Activated T-helper 1 cell treated with anti-CD3 and anti-CD28 coated beads, Interleukin-12 subunit alpha, Interleukin-12 subunit beta, Interleukin-2, Interleukin-4 antibody, amounts not matched to agents 30 ng/mL and 10 ng/mL and 1 ng/mL, durations not matched to agents 14 hours and 24 hours and 36 hours (primary cell): ENCODE measurements at regions of chr9 and their contacts with region 1.

Region 1: DNA sequence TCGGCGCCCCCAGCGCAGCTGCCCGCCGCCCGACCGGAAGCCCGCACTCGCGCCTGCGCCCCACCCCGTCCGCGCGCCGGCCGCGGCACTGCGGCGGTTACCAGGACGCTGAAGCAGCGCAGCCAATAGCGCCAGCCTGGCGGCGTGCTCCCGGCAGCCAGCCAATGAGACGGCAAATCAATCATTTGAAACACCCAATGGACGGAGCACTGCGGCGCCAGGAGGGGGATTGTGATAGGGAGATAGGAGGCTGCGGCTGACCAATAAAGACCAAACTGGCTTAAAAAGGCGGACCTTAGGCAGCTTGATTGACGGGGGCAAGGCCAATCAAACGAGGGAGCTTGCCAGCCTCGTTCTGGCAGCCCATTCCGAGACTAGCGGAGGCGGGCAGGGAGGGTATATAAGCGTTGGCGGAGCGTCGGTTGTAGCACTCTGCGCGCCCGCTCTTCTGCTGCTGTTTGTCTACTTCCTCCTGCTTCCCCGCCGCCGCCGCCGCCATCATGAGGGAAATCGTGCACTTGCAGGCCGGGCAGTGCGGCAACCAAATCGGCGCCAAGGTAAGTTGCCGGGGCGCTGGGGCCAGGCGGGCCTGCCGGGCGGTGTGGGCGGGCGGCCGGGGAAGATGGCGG is at the start of gene TUBB4B:
- DNase-seq: peak; percentile 98
- H3K4me3 Mint-ChIP-seq: peak within 1 kb of the TSS; percentile 92
- H3K27ac Mint-ChIP-seq: peak within 1 kb of the TSS; percentile 91
- H3K4me1 Mint-ChIP-seq: peaks cover 22% of the 10 kb centered on the region
- H3K27me3 Mint-ChIP-seq: no peaks in the 10 kb centered on the region
- total RNA-seq, gene TUBB4B: 277 and 280 TPM in 2 replicates

Region 2: GRCh38 chr9:136885950-136886578 is 354.9 kb before region 1 on chr9 and contains the start of gene TRAF2:
- intact Hi-C with region 1: loop called (anchors 2 kb)
- DNase-seq: peak; percentile 99
- H3K4me3 Mint-ChIP-seq: peak within 1 kb of the TSS; percentile 98
- H3K27ac Mint-ChIP-seq: peak within 1 kb of the TSS; percentile 93
- H3K4me1 Mint-ChIP-seq: peaks cover 44% of the 10 kb centered on the region
- H3K27me3 Mint-ChIP-seq: no peaks in the 10 kb centered on the region
- total RNA-seq, gene TRAF2: 67.4 and 76.3 TPM in 2 replicates

Region 3: DNA sequence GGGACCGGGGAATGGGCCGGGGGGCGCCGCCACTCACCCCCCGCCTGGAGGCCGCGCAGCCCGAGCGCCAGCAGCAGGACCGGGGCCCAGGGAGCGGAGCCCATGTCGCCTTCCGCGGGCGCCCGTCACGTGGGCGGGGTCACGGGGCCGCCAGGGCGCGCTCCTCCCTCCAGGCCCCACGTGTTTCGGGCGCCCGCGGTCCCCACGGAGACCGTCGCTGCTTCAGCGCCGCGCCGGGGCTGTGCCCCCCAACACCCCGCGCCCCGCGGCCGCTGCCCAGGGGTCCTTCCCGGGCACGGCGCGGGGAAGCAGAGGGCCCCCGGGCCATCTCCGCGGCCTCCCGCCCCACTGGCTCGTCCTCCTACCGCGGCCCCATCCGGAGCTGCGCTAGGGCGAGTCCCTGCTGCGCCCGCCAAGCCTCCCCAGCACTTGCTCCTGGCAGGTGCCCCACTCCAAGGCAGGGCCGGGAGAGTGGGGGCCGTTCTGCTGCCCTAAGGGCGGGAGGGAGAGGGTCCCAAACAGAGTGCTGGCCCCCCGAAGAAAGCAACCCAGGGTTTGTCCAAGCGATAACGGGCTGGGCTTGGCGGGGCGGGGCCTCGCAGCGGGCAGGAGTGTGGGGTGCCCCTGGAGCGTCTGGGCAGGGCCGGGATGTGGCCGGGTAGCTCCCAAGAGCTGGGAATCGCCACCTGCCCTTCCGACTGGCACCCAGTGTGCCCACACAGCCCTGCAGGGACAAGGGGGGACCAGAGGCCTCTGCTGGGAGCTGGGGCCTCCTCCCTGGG is 126.2 kb before region 1 on chr9 and contains the start of gene DPP7:
- intact Hi-C with region 1: loop called (anchors 1 kb)
- DNase-seq: peak; percentile 76
- H3K4me3 Mint-ChIP-seq: peak within 1 kb of the TSS; percentile 82
- H3K27ac Mint-ChIP-seq: peak within 1 kb of the TSS; percentile 52
- H3K4me1 Mint-ChIP-seq: peaks cover 11% of the 10 kb centered on the region
- H3K27me3 Mint-ChIP-seq: no peaks in the 10 kb centered on the region
- total RNA-seq, gene DPP7: 371 and 394 TPM in 2 replicates

Region 4: DNA sequence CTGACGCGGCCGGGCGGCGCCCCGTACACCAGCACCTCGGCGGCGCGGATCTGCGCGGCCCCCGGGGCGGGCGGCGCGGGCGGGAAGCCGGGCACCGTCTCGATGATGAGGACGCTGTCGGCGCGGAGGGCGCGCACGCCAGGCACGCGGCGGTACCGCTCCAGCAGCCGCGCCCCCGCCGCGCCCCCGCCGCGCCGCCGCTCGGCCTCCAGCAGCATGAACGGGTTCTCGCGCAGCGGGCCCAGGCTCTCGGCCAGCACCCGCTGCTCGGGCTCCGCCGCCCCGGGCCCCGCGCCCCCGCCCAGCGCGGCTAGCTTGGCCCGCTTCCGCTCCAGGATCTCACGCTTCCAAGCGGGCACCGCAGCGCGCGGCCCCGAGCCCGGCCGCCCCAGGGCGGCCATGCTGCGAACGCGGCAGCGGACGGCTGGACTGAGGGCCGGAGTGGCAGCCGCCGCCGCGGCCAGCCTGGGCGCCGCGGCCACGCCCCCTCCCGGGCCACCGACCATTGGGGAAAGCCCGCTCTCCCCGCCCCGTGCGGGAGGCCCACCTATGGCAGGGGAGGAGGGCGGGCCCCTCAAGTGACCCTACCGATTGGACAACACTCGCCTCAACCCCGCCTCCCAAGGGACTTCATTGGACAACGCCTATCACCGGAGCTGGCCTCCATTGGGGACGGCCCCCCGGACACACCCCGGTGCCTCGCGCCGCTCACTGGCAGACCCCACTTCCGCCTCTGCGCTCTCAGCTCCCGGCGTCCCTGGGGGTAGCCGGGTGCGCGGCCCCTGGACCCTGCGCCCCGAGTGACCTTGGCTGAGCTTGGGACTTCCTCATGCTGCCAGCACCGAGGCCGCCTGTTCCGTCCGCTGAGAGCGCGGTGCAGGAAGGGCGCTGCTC is 40.4 kb before region 1 on chr9 and contains the start of gene TPRN:
- intact Hi-C with region 1: loop called (anchors 1 kb)
- DNase-seq: peak; percentile 99
- H3K4me3 Mint-ChIP-seq: peak within 1 kb of the TSS; percentile 85
- H3K27ac Mint-ChIP-seq: peak within 1 kb of the TSS; percentile 75
- H3K4me1 Mint-ChIP-seq: peaks cover 23% of the 10 kb centered on the region
- H3K27me3 Mint-ChIP-seq: no peaks in the 10 kb centered on the region
- total RNA-seq, gene TPRN: 15.6 and 17.2 TPM in 2 replicates

Region 5: DNA sequence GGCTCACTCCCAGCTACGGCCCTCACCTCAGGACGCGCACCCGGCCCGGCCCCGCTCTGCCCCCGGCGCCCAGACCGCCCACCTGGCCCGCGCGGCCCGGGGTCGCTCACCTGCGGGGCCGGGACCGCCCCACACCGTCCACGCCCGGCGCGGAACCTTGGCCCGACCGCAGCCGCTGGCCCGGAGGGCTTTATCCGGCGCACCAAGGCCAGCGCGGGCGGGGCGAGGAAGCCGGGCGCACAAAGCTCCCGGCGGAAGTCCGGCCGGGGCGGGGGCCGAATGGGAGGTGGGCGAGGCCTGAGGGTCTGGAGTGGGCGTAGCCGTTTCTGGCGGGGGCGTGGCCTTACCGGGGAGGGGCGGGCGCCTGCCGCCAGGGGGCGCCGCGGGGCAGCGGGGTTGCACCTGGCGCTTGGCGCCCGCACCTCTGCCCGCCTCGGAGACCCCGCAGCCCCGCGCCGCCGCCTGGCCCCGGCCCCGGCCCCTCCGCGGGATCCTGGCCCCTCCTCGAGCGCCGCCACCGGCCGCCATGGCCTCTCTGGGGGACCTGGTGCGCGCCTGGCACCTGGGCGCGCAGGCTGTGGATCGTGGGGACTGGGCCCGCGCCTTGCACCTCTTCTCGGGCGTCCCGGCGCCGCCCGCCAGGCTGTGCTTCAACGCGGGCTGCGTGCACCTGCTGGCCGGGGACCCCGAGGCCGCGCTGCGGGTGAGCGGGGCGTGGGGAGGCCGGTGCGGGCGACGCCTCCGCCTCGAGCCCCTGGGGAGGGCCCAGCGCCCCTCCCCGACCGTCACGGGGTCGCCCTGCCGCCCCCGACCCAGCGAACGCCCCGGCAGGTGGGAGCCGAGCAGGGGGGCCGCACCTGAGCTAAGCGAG is 182.3 kb after region 1 on chr9 and contains the starts of genes EXD3 and NOXA1:
- intact Hi-C with region 1: loop called (anchors 5 kb)
- DNase-seq: peak; percentile 92
- H3K4me3 Mint-ChIP-seq: peak within 1 kb of the TSS; percentile 90
- H3K27ac Mint-ChIP-seq: peak within 1 kb of the TSS; percentile 52
- H3K4me1 Mint-ChIP-seq: peaks cover 7% of the 10 kb centered on the region
- H3K27me3 Mint-ChIP-seq: peaks cover 9% of the 10 kb centered on the region
- total RNA-seq, gene EXD3: 4.8 and 4.9 TPM in 2 replicates
- total RNA-seq, gene NOXA1: 0.49 and 0.54 TPM in 2 replicates

Region 6: DNA sequence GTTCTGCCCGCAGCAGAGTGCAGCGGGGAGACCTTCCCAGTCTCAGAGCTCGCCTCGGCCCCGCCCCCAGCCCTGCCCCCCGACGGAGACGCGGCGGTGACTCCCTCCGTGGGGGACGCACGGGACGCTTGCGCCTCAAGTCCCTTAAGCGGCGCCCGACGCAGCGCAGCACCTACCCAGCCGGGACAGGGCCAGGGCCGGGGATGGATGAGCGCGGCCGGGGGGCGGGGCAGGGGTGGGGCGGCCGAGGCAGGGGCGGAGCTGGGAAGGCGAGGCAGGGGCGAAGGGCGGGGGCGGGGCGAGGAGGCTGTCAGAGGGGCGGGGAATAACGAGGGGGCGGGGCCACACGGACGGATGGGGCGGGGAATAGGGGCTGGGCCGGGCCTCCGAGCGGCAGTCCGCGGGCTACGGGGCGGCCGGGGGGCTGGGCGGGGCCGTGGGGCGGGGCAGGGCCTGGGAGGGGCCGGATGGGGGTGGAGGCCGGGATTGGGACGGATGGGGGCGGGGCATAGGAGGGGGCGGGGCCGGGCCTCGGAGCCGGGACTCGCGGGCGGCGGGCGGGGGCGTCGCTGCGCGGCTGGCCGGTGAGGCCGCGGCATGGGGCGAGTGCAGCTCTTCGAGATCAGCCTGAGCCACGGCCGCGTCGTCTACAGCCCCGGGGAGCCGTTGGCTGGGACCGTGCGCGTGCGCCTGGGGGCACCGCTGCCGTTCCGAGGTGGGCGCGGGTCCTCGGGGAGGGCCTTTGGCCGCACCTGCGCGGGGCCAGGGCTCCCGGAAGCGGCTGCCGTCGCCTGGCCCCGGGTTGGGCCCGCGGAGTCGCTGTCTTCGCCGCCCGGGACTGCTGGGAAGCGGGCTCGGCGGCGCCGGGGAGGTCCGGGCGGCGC is 364.4 kb after region 1 on chr9 and contains the start of gene ARRDC1:
- intact Hi-C with region 1: no loop called
- DNase-seq: peak; percentile 85
- H3K4me3 Mint-ChIP-seq: peak within 1 kb of the TSS; percentile 85
- H3K27ac Mint-ChIP-seq: peak within 1 kb of the TSS; percentile 74
- H3K4me1 Mint-ChIP-seq: peaks cover 20% of the 10 kb centered on the region
- H3K27me3 Mint-ChIP-seq: peaks cover 6% of the 10 kb centered on the region
- total RNA-seq, gene ARRDC1: 65.7 and 70.3 TPM in 2 replicates